Kidney (tissue), 22 donors: ENCODE measurements at regions of chr18 and their contacts with region 1.

Region 1: DNA sequence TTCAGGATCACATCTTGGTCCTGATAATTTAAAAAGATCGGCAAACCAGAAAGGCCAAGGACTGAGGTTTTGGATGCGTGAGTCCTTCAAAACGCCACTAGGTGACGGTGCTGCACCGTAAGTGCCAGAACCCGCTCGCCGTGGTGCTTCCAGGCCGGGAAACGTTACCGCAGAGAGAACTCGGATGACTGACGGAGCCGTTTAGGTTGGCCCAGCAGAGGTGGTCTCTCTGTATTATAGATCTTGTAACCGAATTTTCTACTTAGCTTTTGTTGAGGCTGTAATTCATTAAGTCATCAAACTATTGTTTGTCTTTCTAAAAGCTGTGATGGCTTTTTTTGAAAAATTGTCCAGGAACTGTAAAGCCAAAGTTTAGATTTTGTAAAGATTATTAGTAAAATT is 39.8 kb upstream of the ADCYAP1 start:
- DNase-seq: peak; percentile 60 to 84 (median 72)
- H3K4me3 ChIP-seq: no peak overlapping the region
- H3K27ac ChIP-seq: no peak overlapping the region
- H3K4me1 ChIP-seq: no peaks in the 10 kb centered on the region
- H3K27me3 ChIP-seq: no peaks in the 10 kb centered on the region
- CTCF ChIP-seq: peak; percentile 99

Region 2: DNA sequence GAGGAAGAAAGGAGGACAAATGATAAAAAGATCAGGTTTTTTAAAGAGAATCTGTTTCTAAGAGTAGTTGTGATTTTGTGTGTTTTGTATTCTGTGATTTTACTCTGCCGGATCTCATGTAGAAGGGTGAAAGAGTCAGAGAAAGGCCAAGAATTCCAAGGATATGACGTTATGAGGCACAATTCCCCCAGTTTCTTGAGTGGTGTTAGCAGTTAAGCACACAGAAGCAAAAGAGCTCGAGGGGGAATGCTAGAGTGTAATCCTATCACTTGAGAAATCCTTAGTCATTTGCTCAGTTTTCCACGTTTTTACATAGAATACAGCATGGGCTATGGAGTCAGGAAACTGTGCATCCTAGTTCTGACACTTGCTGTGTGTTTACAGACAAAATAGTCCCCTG is 1671.6 kb after region 1 on chr18:
- intact Hi-C with region 1: loop called (anchors 10 kb)
- DNase-seq: no peak
- H3K4me3 ChIP-seq: no peak overlapping the region
- H3K27ac ChIP-seq: no peak overlapping the region
- H3K4me1 ChIP-seq: no peaks in the 10 kb centered on the region
- H3K27me3 ChIP-seq: no peaks in the 10 kb centered on the region
- CTCF ChIP-seq: no peak